GM12878 (cell line): ENCODE measurements at regions of chr1 and their contacts with region 1.

Region 1: DNA sequence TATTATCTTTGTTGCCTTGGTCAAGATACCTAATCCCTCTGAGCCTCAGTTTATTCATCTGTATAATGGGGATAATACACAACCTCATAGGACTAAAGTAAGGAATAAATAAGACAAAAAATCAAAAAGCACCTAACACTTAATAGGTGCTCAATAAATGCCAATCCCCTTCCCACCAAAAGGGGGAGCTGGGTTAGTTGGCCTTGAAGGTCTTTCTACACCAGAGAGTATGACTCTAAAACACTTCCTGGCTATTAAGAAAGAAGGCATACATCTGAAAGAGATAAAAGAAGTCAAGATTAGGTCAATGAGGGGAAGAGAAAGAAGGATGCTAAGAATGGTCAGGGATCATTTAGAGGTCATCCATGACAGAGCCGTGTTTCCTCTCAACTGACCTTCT is 11.1 kb downstream of the VSIG8 start:
- DNase-seq: no peak
- ATAC-seq: no peak
- H3K4me3 ChIP-seq: no peak overlapping the region
- H3K27ac ChIP-seq: no peak overlapping the region
- H3K4me1 ChIP-seq: no peaks in the 10 kb centered on the region
- H3K27me3 ChIP-seq: peaks cover 2 to 8% of the 10 kb centered on the region in 2 experiments; a peak in 3 of 4 replicates
- CTCF ChIP-seq: peak in 1 of 3 experiments; percentile 7; a peak in 1 of 6 replicates
- EP300 ChIP-seq: no peak
- POLR2A ChIP-seq: no peak
- RAD21 ChIP-seq: no peak

Region 2: GRCh38 chr1:159737238-159737916 is 114.0 kb before region 1 on chr1:
- CTCF ChIA-PET with region 1: no interaction called
- POLR2A ChIA-PET with region 1: no interaction called
- RAD21 ChIA-PET with region 1: no interaction called
- SMC1A ChIA-PET with region 1: no interaction called
- in situ Hi-C with region 1: no loop called
- intact Hi-C with region 1: no loop called
- DNase-seq: no peak
- ATAC-seq: no peak
- H3K4me3 ChIP-seq: no peak overlapping the region
- H3K27ac ChIP-seq: no peak overlapping the region
- H3K4me1 ChIP-seq: no peaks in the 10 kb centered on the region
- H3K27me3 ChIP-seq: no peaks in the 10 kb centered on the region
- CTCF ChIP-seq: no peak
- EP300 ChIP-seq: no peak
- POLR2A ChIP-seq: no peak
- RAD21 ChIP-seq: no peak

Region 3: DNA sequence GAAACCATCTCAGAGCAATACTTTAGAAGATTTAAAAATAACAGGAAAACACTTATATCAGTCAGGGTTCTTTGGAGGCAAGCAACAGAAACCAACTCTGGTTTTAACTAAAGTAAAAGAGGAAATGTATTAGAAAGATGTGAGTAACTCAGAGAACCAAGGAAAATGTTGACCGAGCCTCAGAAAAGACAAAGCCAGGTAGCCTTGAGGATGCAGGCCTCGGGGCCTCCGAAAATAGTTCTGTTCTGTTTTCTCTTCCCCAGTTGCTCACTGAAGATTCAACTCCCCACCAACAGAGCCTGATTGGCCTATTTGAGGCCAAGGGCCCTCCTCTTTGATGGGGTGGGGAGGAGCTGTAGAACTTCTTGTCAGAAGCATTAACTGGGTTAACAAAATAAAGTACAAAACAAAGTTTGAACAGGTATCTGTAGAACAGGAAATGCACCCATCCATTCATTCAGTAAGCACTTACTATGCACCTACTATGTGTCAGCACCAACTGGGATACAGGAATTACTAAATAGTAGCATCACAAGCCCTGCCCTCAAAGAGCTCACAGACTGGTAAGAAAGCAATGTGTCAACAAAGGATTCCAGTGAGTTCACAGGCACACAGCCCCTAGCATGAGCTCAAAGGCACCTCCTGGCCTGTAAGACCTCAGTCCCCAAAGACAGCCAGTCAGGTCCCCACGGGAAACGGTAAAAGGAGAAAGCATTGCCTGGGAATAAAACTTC is 12.1 kb before region 1 on chr1:
- CTCF ChIA-PET with region 1: interaction called, 13 read pairs
- POLR2A ChIA-PET with region 1: no interaction called
- RAD21 ChIA-PET with region 1: interaction called, 3 read pairs
- SMC1A ChIA-PET with region 1: interaction called, 3 read pairs
- in situ Hi-C with region 1: no loop called
- intact Hi-C with region 1: no loop called
- DNase-seq: peak; percentile 36
- ATAC-seq: peak; percentile 88
- H3K4me3 ChIP-seq: no peak overlapping the region; the same call in 1 of the 2 replicates
- H3K27ac ChIP-seq: peak overlapping the region; percentile 68
- H3K4me1 ChIP-seq: peaks cover 26% of the 10 kb centered on the region
- H3K27me3 ChIP-seq: peaks cover 0 to 4% of the 10 kb centered on the region in 2 experiments; a peak in 1 of 4 replicates
- CTCF ChIP-seq: no peak
- EP300 ChIP-seq: no peak
- POLR2A ChIP-seq: no peak
- RAD21 ChIP-seq: no peak

Region 4: DNA sequence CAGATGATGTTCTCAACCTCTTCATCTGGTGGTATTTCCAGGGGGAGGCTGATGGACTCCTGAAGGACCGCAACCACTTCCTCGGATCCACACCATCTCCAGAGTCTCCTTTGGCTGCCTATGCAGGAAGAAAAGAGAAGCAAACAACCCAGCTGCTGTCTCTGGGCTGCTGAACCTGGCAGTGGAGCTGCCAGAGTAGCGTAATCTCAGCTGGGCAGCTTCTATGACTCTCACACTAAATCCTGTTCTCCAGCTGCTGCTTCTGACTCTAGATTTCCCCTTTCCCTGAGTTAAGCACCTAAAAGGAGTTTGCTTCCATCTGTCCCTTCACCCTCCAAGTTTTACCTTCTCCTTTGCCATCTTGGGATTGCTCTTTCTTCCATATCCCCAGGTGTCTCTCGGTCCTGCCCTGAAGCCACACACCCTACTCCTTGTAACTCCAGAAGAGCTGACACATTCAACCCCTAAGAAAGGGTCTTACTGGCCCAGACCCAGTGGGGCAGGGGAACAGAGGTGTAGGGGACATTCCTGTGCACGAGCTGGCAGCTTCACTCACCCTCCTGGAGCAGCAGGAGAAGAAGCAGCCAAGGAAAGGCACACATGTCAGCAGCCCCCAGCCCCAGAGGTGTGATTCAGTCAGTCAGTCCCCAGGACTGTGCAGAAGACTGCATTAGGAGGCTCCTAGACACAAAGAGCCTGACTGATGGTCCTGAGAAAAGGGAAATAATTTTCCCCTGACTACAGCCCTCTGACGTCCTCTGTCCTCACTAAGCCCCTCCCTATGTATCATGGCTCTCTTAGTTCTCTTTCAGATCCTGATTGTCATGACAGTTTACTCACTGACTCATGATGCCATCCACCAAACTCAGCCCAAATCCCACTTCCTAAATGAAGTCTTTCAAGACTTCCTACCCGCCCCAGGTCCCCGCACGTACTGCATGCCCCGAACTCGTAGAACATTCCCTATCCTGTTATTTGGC is 102.4 kb after region 1 on chr1 and contains the start of gene SLAMF9:
- CTCF ChIA-PET with region 1: no interaction called
- POLR2A ChIA-PET with region 1: no interaction called
- RAD21 ChIA-PET with region 1: no interaction called
- SMC1A ChIA-PET with region 1: no interaction called
- in situ Hi-C with region 1: no loop called
- intact Hi-C with region 1: no loop called
- DNase-seq: no peak
- ATAC-seq: no peak
- H3K4me3 ChIP-seq: no peak within 1 kb of the TSS
- H3K27ac ChIP-seq: no peak within 1 kb of the TSS
- H3K4me1 ChIP-seq: peaks cover 5% of the 10 kb centered on the region
- H3K27me3 ChIP-seq: peaks cover 0 to 4% of the 10 kb centered on the region in 2 experiments; a peak in 2 of 4 replicates
- CTCF ChIP-seq: no peak
- EP300 ChIP-seq: no peak
- POLR2A ChIP-seq: no peak
- RAD21 ChIP-seq: no peak
- polyA plus RNA-seq, gene SLAMF9: not detected